Ovary (tissue), 10 donors: ENCODE measurements at regions of chr18 and their contacts with region 1.

Region 1: GRCh38 chr18:41484069-41484468 is 471.0 kb upstream of the PIK3C3 start:
- DNase-seq: no peak
- H3K4me3 ChIP-seq: no peak overlapping the region
- H3K27ac ChIP-seq: no peak overlapping the region
- H3K4me1 ChIP-seq: no peaks in the 10 kb centered on the region
- H3K27me3 ChIP-seq: no peaks in the 10 kb centered on the region
- CTCF ChIP-seq: no peak
- EP300 ChIP-seq: no peak
- POLR2A ChIP-seq: no peak

Region 2: GRCh38 chr18:41466436-41467160 is 17.5 kb before region 1 on chr18:
- intact Hi-C with region 1: no loop called
- DNase-seq: no peak
- H3K4me3 ChIP-seq: no peak overlapping the region
- H3K27ac ChIP-seq: no peak overlapping the region
- H3K4me1 ChIP-seq: no peaks in the 10 kb centered on the region
- H3K27me3 ChIP-seq: no peaks in the 10 kb centered on the region
- CTCF ChIP-seq: no peak
- EP300 ChIP-seq: no peak
- POLR2A ChIP-seq: no peak

Region 3: DNA sequence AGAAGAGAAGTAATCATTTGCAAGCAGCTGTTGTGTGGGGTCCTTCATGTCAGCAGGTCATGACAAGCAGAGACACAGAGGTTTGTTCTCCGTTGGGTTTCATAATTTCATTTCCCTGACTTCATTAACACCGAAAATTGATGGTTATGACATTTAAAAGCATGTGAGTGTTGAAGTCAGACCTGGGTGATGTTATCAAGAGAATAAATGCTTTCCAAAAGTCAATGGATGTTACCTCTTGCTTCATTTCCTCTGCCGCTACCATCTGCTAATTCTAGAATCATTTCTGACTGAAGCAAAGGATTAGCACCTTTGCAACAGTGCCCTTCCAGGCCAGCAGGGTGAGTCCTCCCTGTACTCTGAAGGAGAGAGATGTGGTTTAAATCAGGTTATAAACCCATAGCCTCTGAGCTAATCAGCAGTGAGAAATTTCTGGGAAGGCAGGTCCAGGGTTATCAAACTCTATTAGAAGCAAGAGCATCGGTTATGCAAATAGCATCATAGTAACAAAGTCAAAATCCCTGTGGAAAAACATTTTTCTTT is 917.1 kb after region 1 on chr18:
- intact Hi-C with region 1: loop called in 1 of 4 experiments (anchors 5 kb)
- DNase-seq: no peak
- H3K4me3 ChIP-seq: no peak overlapping the region
- H3K27ac ChIP-seq: no peak overlapping the region
- H3K4me1 ChIP-seq: no peaks in the 10 kb centered on the region
- H3K27me3 ChIP-seq: no peaks in the 10 kb centered on the region
- CTCF ChIP-seq: no peak
- EP300 ChIP-seq: no peak
- POLR2A ChIP-seq: no peak